HCT116 (cell line): ENCODE measurements at regions of chr3 and their contacts with region 1.

Region 1: DNA sequence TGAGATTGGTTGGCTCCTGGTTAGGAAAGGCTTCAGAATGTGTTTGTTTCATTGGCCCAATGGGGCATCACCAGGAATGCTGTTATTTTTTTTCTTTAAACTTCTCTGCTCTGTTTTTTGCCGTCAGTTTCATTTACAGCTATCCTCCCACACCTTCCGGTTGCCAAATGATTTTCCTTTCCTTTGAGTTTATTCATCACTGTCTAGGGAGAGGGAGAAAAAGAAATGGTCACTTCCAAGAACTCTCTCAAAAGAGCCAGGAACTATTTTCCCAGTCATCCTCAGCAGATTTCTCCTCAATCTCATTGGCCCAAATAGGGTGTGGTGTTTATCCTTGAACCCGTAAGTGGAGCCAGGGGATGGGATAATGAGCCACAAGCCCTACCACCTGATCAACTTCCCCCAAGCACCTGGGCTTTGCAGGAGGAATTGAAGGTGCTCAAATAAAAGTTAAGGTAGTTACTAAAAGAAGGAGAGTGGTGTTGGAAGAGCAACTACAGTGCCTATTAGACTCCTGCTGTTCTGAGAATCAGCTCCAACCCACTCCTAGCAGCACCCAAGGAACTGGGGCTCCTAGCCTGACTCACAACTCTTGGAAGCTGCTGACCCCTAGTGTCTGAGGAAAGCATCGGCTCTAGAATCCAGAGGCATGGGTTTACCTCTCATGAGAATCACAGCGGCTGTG is 183.8 kb upstream of the IL12A start:
- DNase-seq: peak; percentile 60
- ATAC-seq: peak; percentile 99
- H3K4me3 ChIP-seq: no peak overlapping the region
- H3K27ac ChIP-seq: no peak overlapping the region
- H3K4me1 ChIP-seq: 0 out of 4 replicates have a peak, but pooled peaks cover 0 to 4% of the 10 kb centered on the region in 2 experiments
- H3K27me3 ChIP-seq: no peaks in the 10 kb centered on the region
- CTCF ChIP-seq: peak; percentile 89 to 94 (median 92)
- POLR2A ChIP-seq: no peak
- RAD21 ChIP-seq: peak; percentile 98

Region 2: DNA sequence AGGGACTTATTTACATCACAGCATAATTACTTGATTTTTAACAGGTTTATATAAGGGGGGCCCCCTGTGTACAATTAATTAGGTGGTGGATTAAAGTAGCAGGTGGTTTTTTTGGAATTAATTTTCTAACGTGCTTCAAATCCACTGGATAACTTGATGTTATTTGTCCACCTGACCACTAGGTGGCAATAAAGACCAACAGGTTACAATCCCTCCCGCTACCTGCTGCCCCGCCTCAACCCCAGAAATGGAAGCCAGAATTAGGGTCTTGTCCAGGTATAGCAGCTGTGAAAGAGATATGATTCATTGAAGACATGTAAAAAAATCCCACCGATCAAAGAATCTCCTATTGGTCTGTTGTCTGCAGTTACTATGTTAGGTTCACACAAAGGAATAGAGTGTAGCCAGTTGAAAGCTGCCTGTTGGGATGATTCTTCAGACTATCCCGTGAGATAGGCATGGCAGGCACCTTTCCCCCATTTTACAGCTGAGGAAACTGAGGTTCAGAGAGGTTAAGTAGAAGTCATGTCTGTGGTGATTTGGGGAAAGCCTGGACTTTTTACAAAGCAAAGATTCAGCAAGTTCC is 959.0 kb before region 1 on chr3:
- CTCF ChIA-PET with region 1: no interaction called
- POLR2A ChIA-PET with region 1: no interaction called
- RAD21 ChIA-PET with region 1: no interaction called
- intact Hi-C with region 1: loop called (anchors 5 kb)
- DNase-seq: peak; percentile 27
- ATAC-seq: peak; percentile 85
- H3K4me3 ChIP-seq: no peak overlapping the region
- H3K27ac ChIP-seq: no peak overlapping the region
- H3K4me1 ChIP-seq: no peaks in the 10 kb centered on the region
- H3K27me3 ChIP-seq: no peaks in the 10 kb centered on the region
- CTCF ChIP-seq: peak; percentile 58 to 77 (median 68); a peak in 4 of 6 replicates
- POLR2A ChIP-seq: no peak
- RAD21 ChIP-seq: peak; percentile 87

Region 3: DNA sequence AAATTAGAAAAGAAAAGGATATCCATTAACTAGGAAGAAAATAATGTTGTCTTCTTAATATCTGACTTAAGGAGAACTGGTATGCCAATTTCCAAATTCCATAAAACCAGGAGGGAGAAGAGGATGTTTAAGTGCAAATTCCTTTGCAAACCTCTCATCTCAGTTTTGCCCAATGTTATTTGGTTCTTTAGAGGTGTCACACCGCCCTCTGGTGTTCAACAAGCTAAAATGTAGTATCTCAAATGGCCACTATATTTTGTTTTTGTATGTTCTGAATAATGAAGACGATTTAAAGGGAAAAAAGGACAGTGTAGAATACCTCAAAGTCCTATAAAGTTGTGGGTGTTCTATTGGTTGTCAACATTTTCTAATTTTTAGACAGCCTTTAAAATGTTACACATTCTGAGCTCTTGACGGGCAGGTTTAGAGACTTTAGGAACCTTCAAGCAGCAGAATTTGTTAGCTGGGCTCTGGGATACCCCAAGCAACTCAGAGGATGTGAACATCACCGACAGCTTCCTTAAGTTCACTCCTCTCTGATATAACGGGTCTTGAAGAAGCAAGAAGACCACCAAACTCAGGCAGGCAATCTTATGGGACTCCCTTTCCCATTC is 544.7 kb before region 1 on chr3:
- CTCF ChIA-PET with region 1: interaction called, 5 read pairs
- POLR2A ChIA-PET with region 1: no interaction called
- RAD21 ChIA-PET with region 1: no interaction called
- intact Hi-C with region 1: loop called (anchors 1 kb)
- DNase-seq: peak; percentile 45
- ATAC-seq: peak; percentile 74
- H3K4me3 ChIP-seq: no peak overlapping the region
- H3K27ac ChIP-seq: no peak overlapping the region
- H3K4me1 ChIP-seq: no peaks in the 10 kb centered on the region
- H3K27me3 ChIP-seq: 0 out of 2 replicates have a peak, but pooled peaks cover 6% of the 10 kb centered on the region
- CTCF ChIP-seq: peak; percentile 59 to 89 (median 83)
- POLR2A ChIP-seq: no peak
- RAD21 ChIP-seq: peak; percentile 89

Region 4: GRCh38 chr3:159322322-159322939 is 482.4 kb before region 1 on chr3:
- CTCF ChIA-PET with region 1: interaction called, 17 read pairs
- POLR2A ChIA-PET with region 1: no interaction called
- RAD21 ChIA-PET with region 1: no interaction called
- intact Hi-C with region 1: loop called (anchors 1 kb)
- DNase-seq: peak; percentile 41
- ATAC-seq: peak; percentile 99
- H3K4me3 ChIP-seq: no peak overlapping the region
- H3K27ac ChIP-seq: no peak overlapping the region
- H3K4me1 ChIP-seq: no peaks in the 10 kb centered on the region; a peak in 1 of 4 replicates
- H3K27me3 ChIP-seq: no peaks in the 10 kb centered on the region
- CTCF ChIP-seq: peak; percentile 65 to 98 (median 97); a peak in 5 of 6 replicates
- POLR2A ChIP-seq: no peak
- RAD21 ChIP-seq: peak; percentile 68

Region 5: GRCh38 chr3:159593927-159594605 is 210.8 kb before region 1 on chr3:
- CTCF ChIA-PET with region 1: no interaction called
- POLR2A ChIA-PET with region 1: no interaction called
- RAD21 ChIA-PET with region 1: no interaction called
- intact Hi-C with region 1: no loop called
- DNase-seq: no peak
- ATAC-seq: no peak
- H3K4me3 ChIP-seq: no peak overlapping the region
- H3K27ac ChIP-seq: no peak overlapping the region
- H3K4me1 ChIP-seq: no peaks in the 10 kb centered on the region
- H3K27me3 ChIP-seq: no peaks in the 10 kb centered on the region
- CTCF ChIP-seq: no peak
- POLR2A ChIP-seq: no peak
- RAD21 ChIP-seq: no peak

Region 6: DNA sequence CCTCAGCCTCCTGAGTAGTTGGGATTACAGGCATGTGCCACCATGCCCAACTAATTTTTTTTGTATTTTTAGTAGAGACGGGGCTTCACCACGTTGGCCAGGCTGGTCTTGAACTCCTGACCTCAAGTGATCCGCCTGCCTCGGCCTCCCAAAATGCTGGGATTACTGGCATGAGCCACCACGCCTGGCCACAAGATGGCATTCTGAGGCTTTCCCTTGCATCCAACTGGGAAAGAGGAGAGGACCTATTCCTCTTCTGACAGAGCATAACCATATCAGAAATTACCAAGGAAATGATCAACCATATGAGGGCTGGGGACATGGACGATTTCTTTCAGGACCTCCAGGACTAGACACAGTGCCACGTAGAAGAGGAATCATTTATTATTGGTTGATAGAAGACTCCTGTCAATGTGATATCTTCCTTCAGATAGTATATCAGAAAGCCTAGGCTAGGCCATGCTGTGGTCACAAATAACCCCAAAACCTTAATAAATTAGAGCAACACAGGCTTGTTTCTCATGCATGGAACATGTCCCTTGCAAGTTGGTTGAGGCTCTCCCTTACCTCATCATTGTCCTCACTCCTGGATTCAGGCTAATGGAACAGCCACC is 188.5 kb before region 1 on chr3:
- CTCF ChIA-PET with region 1: interaction called, 12 read pairs
- POLR2A ChIA-PET with region 1: no interaction called
- RAD21 ChIA-PET with region 1: interaction called in 1 of 2 experiments, 3 read pairs
- intact Hi-C with region 1: loop called (anchors 1 kb)
- DNase-seq: no peak
- ATAC-seq: peak; percentile 81
- H3K4me3 ChIP-seq: no peak overlapping the region
- H3K27ac ChIP-seq: no peak overlapping the region
- H3K4me1 ChIP-seq: peaks cover 6 to 13% of the 10 kb centered on the region in 2 experiments; a peak in 3 of 4 replicates
- H3K27me3 ChIP-seq: no peaks in the 10 kb centered on the region
- CTCF ChIP-seq: peak; percentile 56 to 72 (median 61); a peak in 5 of 6 replicates
- POLR2A ChIP-seq: no peak
- RAD21 ChIP-seq: peak; percentile 90

Region 7: GRCh38 chr3:159781867-159782266 is 23.0 kb before region 1 on chr3:
- CTCF ChIA-PET with region 1: interaction called, 21 read pairs
- POLR2A ChIA-PET with region 1: no interaction called
- RAD21 ChIA-PET with region 1: interaction called, 4 to 6 read pairs
- intact Hi-C with region 1: no loop called
- DNase-seq: no peak
- ATAC-seq: peak; percentile 77
- H3K4me3 ChIP-seq: no peak overlapping the region
- H3K27ac ChIP-seq: no peak overlapping the region
- H3K4me1 ChIP-seq: peaks cover 15 to 36% of the 10 kb centered on the region in 2 experiments
- H3K27me3 ChIP-seq: no peaks in the 10 kb centered on the region
- CTCF ChIP-seq: peak in 2 of 3 experiments; percentile 47 to 59; a peak in 4 of 6 replicates
- POLR2A ChIP-seq: no peak
- RAD21 ChIP-seq: peak; percentile 11; the same call in 1 of the 2 replicates

Region 8: GRCh38 chr3:159787191-159787590 is 17.7 kb before region 1 on chr3:
- CTCF ChIA-PET with region 1: interaction called, 21 read pairs
- POLR2A ChIA-PET with region 1: no interaction called
- RAD21 ChIA-PET with region 1: interaction called, 4 to 6 read pairs
- intact Hi-C with region 1: no loop called
- DNase-seq: peak; percentile 82
- ATAC-seq: peak; percentile 85
- H3K4me3 ChIP-seq: peak overlapping the region in 1 of 2 experiments; percentile 29; a peak in 2 of 4 replicates
- H3K27ac ChIP-seq: peak overlapping the region; percentile 49
- H3K4me1 ChIP-seq: peaks cover 35 to 46% of the 10 kb centered on the region in 2 experiments
- H3K27me3 ChIP-seq: no peaks in the 10 kb centered on the region
- CTCF ChIP-seq: no peak
- POLR2A ChIP-seq: no peak
- RAD21 ChIP-seq: no peak